Transverse colon (tissue), 4 donors: ENCODE measurements at regions of chr3 and their contacts with region 1.

Region 1: DNA sequence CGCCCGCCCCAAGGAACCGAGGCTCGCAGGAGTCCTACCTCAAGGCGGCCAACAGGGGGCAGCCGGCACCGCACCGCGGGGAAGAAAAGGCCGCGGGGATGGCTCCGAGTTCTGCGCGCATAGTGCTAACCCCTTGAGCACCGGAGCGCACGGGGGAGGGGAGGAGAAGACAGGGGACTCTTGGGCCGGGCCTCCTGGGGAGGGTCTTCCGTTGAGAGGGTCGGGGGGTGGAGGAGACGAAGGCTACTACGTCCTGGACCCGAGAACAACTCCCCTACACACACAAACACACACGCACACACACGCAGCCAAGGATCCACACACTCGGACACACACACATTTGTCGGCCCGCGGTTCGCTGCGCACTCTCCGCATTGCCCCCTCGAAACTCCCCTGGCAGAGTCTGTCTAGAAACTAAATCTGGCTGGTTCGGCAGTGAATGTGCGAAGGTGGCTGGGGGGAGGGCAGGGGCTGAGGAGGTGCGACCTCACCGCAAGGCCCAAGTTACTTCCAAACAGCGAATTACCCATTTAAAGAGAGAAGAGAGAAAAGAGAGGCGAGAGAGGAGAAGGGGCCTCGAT is 1.8 kb downstream of the WNT5A start:
- DNase-seq: peak; percentile 82
- H3K4me3 ChIP-seq: peak overlapping the region; percentile 61 to 82 (median 73)
- H3K27ac ChIP-seq: peak overlapping the region; percentile 66 to 82 (median 74)
- H3K4me1 ChIP-seq: peaks cover 10 to 80% (median 57%) of the 10 kb centered on the region in 4 donors
- H3K27me3 ChIP-seq: peaks cover 96% of the 10 kb centered on the region
- CTCF ChIP-seq: peak; percentile 52 to 90 (median 87)
- EP300 ChIP-seq: no peak
- POLR2A ChIP-seq: no peak

Region 2: GRCh38 chr3:55686426-55687254 is 201.3 kb after region 1 on chr3:
- in situ Hi-C with region 1: no loop called
- intact Hi-C with region 1: no loop called
- DNase-seq: no peak
- H3K4me3 ChIP-seq: no peak overlapping the region
- H3K27ac ChIP-seq: no peak overlapping the region
- H3K4me1 ChIP-seq: no peaks in the 10 kb centered on the region
- H3K27me3 ChIP-seq: no peaks in the 10 kb centered on the region
- CTCF ChIP-seq: no peak
- EP300 ChIP-seq: no peak
- POLR2A ChIP-seq: no peak

Region 3: GRCh38 chr3:55721716-55722484 is 236.6 kb after region 1 on chr3:
- in situ Hi-C with region 1: loop called in 3 of 4 experiments (anchors 10 to 25 kb)
- intact Hi-C with region 1: loop called (anchors 10 kb)
- DNase-seq: peak; percentile 32
- H3K4me3 ChIP-seq: no peak overlapping the region
- H3K27ac ChIP-seq: no peak overlapping the region
- H3K4me1 ChIP-seq: no peaks in the 10 kb centered on the region
- H3K27me3 ChIP-seq: no peaks in the 10 kb centered on the region
- CTCF ChIP-seq: peak; percentile 41 to 57 (median 52)
- EP300 ChIP-seq: no peak
- POLR2A ChIP-seq: no peak

Region 4: DNA sequence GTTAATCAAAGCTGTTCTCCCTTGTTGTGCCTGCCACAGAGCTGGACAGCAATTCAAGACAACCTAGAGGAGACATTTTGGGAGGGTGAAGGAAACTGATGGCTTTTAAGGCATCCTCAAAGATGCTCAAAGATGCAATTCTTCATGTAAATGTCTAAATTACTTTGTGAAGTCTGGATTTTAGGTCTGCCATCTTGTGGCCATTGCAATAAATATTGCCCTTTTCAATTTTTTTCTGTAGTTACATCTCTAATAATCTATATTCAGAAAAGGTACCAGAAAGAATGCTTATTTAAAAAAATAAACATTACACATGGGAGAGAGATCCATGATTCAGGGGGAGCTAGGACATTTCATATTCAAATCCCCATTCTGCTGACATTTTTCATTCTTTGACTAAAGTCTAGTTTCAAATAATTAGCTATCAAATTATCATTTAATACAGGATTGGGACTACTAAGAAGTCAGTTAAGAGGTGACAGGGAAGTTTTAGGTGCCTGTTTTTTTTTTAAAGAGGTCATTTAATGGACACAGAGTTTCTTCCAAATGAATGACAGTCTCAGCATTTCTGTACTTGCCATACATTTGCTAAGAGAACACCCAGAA is 261.6 kb after region 1 on chr3:
- in situ Hi-C with region 1: loop called in 2 of 4 experiments (anchors 10 to 25 kb)
- intact Hi-C with region 1: no loop called
- DNase-seq: no peak
- H3K4me3 ChIP-seq: no peak overlapping the region
- H3K27ac ChIP-seq: no peak overlapping the region
- H3K4me1 ChIP-seq: peaks cover 0 to 3% (median 0%) of the 10 kb centered on the region in 4 donors
- H3K27me3 ChIP-seq: no peaks in the 10 kb centered on the region
- CTCF ChIP-seq: peak in 4 of 5 experiments; percentile 15 to 39 (median 27)
- EP300 ChIP-seq: no peak
- POLR2A ChIP-seq: no peak

Region 5: DNA sequence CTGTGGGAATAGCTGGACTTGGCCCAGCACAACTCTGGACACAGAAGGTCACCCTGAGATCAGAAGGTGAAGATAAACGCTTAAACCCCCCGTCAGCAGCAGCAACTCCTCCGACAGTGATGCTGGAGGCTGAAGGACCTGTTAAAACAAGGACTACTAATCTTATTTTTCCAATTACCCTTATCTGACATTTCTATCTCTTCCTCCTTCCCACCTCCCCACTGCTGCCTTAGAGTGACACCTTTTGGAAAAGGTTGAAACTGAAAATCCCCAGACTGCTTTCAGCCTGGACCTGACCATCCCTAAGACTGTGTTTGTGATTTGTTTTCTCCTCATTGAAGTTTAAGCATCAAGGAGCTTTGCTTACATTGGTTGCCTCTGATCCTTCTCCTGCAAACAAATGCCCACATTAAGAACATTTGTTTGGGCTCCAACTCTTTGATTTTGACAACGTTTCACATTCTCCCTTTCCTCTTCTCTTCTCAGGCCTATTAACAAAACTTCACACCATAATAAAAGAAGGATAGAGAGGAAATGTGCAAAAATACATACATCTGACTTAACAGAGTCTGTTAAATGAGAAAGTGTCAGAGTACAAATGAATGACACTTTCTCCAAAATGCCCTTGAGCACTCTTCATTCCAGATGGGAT is 412.4 kb after region 1 on chr3:
- in situ Hi-C with region 1: loop called in 1 of 4 experiments (anchors 25 kb)
- intact Hi-C with region 1: no loop called
- DNase-seq: no peak
- H3K4me3 ChIP-seq: no peak overlapping the region
- H3K27ac ChIP-seq: no peak overlapping the region
- H3K4me1 ChIP-seq: no peaks in the 10 kb centered on the region
- H3K27me3 ChIP-seq: no peaks in the 10 kb centered on the region
- CTCF ChIP-seq: peak; percentile 20 to 30 (median 24)
- EP300 ChIP-seq: no peak
- POLR2A ChIP-seq: no peak

Region 6: GRCh38 chr3:56042326-56042951 is 557.1 kb after region 1 on chr3:
- in situ Hi-C with region 1: loop called in 1 of 4 experiments (anchors 25 kb)
- intact Hi-C with region 1: no loop called
- DNase-seq: no peak
- H3K4me3 ChIP-seq: no peak overlapping the region
- H3K27ac ChIP-seq: no peak overlapping the region
- H3K4me1 ChIP-seq: no peaks in the 10 kb centered on the region
- H3K27me3 ChIP-seq: peaks cover 19% of the 10 kb centered on the region
- CTCF ChIP-seq: peak in 4 of 5 experiments; percentile 28 to 38 (median 36)
- EP300 ChIP-seq: no peak
- POLR2A ChIP-seq: no peak

Region 7: GRCh38 chr3:56251343-56251945 is 766.1 kb after region 1 on chr3:
- in situ Hi-C with region 1: loop called (anchors 10 to 25 kb)
- intact Hi-C with region 1: loop called (anchors 5 kb)
- DNase-seq: peak; percentile 17
- H3K4me3 ChIP-seq: no peak overlapping the region
- H3K27ac ChIP-seq: no peak overlapping the region
- H3K4me1 ChIP-seq: no peaks in the 10 kb centered on the region
- H3K27me3 ChIP-seq: peaks cover 3% of the 10 kb centered on the region
- CTCF ChIP-seq: peak; percentile 58 to 82 (median 72)
- EP300 ChIP-seq: no peak
- POLR2A ChIP-seq: no peak